AG04450 (cell line): ENCODE measurements at regions of chr2 and their contacts with region 1.

Region 1: GRCh38 chr2:62705007-62705829 is at the start of gene EHBP1:
- DNase-seq: peak; percentile 100
- H3K4me3 ChIP-seq: peak within 1 kb of the TSS; percentile 86
- H3K27ac ChIP-seq: peak within 1 kb of the TSS; percentile 69
- H3K27me3 ChIP-seq: no peaks in the 10 kb centered on the region
- CTCF ChIP-seq: no peak
- polyA plus RNA-seq, gene EHBP1: 48.2 and 68.6 TPM in 2 replicates

Region 2: GRCh38 chr2:62489162-62489561 is 216.1 kb before region 1 on chr2:
- CTCF ChIA-PET with region 1: no interaction called
- POLR2A ChIA-PET with region 1: interaction called, 10 read pairs
- DNase-seq: peak; percentile 8
- H3K4me3 ChIP-seq: no peak overlapping the region
- H3K27ac ChIP-seq: no peak overlapping the region
- H3K27me3 ChIP-seq: no peaks in the 10 kb centered on the region
- CTCF ChIP-seq: no peak

Region 3: GRCh38 chr2:62672601-62673000 is 32.6 kb before region 1 on chr2:
- CTCF ChIA-PET with region 1: no interaction called
- POLR2A ChIA-PET with region 1: interaction called, 13 read pairs
- DNase-seq: peak; percentile 43
- H3K4me3 ChIP-seq: no peak overlapping the region
- H3K27ac ChIP-seq: peak overlapping the region; percentile 63
- H3K27me3 ChIP-seq: no peaks in the 10 kb centered on the region
- CTCF ChIP-seq: no peak